Activated B cell treated with CpG ODN at 0.5 μM for 24 hours (primary cell): ENCODE measurements at regions of chr6 and their contacts with region 1.

Region 1: GRCh38 chr6:61809004-61809595 is 476.9 kb downstream of the KHDRBS2 start:
- DNase-seq: no peak
- ATAC-seq: no peak
- H3K4me3 Mint-ChIP-seq: no peak overlapping the region
- H3K27ac Mint-ChIP-seq: no peak overlapping the region
- H3K4me1 Mint-ChIP-seq: no peaks in the 10 kb centered on the region
- H3K27me3 Mint-ChIP-seq: no peaks in the 10 kb centered on the region
- CTCF ChIP-seq: peak; percentile 54

Region 2: GRCh38 chr6:62150048-62150663 is 341.1 kb after region 1 on chr6:
- CTCF ChIA-PET with region 1: interaction called, 27 read pairs
- POLR2A ChIA-PET with region 1: no interaction called
- intact Hi-C with region 1: loop called (anchors 1 kb)
- DNase-seq: no peak
- ATAC-seq: peak; percentile 62
- H3K4me3 Mint-ChIP-seq: no peak overlapping the region
- H3K27ac Mint-ChIP-seq: no peak overlapping the region
- H3K4me1 Mint-ChIP-seq: no peaks in the 10 kb centered on the region
- H3K27me3 Mint-ChIP-seq: no peaks in the 10 kb centered on the region
- CTCF ChIP-seq: no peak

Region 3: DNA sequence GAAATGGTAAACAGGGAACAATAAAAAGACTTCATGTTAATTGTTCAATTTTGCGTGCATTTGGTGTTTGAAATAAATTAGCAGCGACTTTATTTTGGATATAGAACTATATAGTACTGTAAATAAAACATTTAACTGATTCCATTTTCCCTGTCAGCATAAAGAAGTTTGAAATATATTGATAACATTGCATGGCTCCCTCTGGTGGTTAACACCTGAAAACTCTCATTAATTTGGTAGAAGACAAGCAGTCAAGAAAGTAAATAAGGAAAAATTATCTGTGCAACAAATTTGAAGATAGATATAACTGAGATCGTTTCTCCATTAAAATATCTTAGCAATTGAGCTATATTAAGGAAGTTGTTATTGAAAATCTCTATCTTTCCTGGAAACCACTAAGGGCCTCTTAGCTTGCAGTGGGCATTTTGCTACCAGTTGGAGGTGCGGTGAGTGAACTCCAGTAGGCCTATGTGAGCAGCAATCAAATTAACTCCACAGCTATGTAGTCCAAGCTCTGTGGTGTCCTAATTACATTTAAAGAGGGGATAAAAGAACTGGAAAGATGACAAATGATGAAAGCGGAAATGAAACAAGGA is 966.4 kb after region 1 on chr6:
- CTCF ChIA-PET with region 1: interaction called, 9 read pairs
- POLR2A ChIA-PET with region 1: no interaction called
- intact Hi-C with region 1: loop called (anchors 1 kb)
- DNase-seq: no peak
- ATAC-seq: no peak
- H3K4me3 Mint-ChIP-seq: no peak overlapping the region
- H3K27ac Mint-ChIP-seq: no peak overlapping the region
- H3K4me1 Mint-ChIP-seq: no peaks in the 10 kb centered on the region
- H3K27me3 Mint-ChIP-seq: no peaks in the 10 kb centered on the region
- CTCF ChIP-seq: no peak

Region 4: GRCh38 chr6:62891065-62891647 is 1082.1 kb after region 1 on chr6:
- CTCF ChIA-PET with region 1: no interaction called
- POLR2A ChIA-PET with region 1: no interaction called
- intact Hi-C with region 1: loop called (anchors 2 kb)
- DNase-seq: no peak
- ATAC-seq: no peak
- H3K4me3 Mint-ChIP-seq: no peak overlapping the region
- H3K27ac Mint-ChIP-seq: no peak overlapping the region
- H3K4me1 Mint-ChIP-seq: no peaks in the 10 kb centered on the region
- H3K27me3 Mint-ChIP-seq: no peaks in the 10 kb centered on the region
- CTCF ChIP-seq: no peak

Region 5: DNA sequence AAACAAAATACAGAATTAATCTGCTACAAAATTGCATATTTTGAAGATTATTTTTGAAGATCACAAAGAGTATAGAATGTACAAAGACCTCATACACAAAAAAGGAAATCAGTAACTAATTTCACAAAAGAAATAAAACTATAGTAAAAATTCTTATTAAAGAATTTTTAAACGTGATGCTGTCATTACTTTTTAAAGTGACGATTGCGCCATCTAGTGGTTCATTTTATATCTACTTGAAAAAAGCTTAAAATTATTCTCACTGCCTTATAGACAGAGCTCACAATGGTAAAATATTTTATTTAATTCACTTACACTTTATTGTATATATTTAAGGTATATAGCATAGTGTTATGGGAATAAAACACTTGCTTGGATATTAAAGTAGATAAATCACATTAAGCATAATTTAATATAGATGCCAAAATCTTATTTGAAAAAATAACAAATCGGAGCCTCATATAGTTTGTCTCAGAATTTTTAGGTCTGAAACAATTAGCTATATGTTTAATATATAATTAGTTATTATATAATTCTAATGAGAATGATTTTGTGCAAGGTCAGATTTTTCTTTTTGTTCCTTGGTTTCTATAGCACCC is 1955.3 kb after region 1 on chr6:
- CTCF ChIA-PET with region 1: interaction called, 6 read pairs
- POLR2A ChIA-PET with region 1: no interaction called
- intact Hi-C with region 1: loop called (anchors 10 kb)
- DNase-seq: no peak
- ATAC-seq: no peak
- H3K4me3 Mint-ChIP-seq: no peak overlapping the region
- H3K27ac Mint-ChIP-seq: no peak overlapping the region
- H3K4me1 Mint-ChIP-seq: no peaks in the 10 kb centered on the region
- H3K27me3 Mint-ChIP-seq: peaks cover 12% of the 10 kb centered on the region
- CTCF ChIP-seq: no peak